GM12878 (cell line): ENCODE measurements at regions of chr9 and their contacts with region 1.

Region 1: DNA sequence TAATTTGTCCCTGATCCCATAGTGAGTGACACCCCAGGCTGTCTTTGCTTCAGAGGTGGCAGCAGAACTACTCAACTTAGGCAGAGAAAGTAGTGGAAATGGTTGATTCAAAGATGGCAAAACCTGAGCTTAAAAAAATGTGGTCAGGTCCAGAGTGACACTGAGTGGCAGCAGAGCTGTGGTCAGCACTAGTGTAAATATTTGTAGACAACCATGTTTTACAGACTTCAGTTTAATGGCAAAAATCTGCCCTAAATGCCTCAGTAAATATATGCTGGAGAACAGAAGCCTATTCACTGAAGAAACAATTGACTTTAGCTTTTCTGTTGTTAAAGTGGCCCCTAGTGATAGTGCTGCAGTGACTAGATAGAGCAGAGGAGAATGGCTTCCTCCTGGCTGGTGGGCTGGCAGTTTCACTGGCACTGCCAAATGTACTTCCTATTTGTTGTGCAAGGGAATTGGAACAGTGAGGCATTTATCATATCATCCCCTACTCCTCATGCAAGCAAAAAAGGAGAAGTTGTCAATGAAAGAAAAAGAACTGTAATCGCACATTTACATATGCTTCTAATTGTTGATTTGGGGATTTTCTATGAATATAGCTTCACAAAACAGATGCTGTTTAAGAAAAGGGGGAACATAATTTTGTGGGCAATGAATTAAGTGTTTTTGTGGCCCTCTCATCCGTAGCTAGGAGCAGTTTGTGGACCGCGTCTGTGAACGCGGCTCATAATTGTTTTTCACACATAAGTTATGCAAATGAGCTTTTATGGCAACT is 12.0 kb downstream of the PBX3 start:
- DNase-seq: no peak
- ATAC-seq: peak; percentile 53
- H3K4me3 ChIP-seq: peak overlapping the region; percentile 49
- H3K27ac ChIP-seq: peak overlapping the region; percentile 4; the same call in 1 of the 2 replicates
- H3K4me1 ChIP-seq: peaks cover 7% of the 10 kb centered on the region; the same call in 1 of the 2 replicates
- H3K27me3 ChIP-seq: no peaks in the 10 kb centered on the region
- CTCF ChIP-seq: no peak; a peak in 1 of 6 replicates
- EP300 ChIP-seq: no peak
- POLR2A ChIP-seq: no peak
- RAD21 ChIP-seq: no peak

Region 2: DNA sequence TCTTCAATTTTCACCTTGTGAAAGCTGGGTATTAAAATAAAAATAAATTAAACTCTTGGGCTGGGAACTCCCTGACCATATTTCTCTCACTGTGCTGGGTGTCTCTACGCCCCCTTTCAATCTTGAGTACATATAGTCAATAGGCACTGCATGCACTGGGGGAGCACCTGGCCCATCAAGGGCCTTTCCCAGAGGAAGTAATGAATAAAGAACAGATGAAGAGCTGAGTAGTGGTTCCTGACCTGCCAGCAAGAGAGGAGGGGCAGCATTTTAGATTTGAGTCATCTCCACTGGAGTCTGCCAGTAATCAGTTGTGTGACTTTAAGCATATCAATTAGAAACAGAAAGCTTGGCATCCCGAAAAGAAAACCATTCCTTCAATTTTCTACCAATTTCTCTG is 58.4 kb before region 1 on chr9:
- CTCF ChIA-PET with region 1: interaction called, 3 read pairs
- POLR2A ChIA-PET with region 1: interaction called, 4 read pairs
- RAD21 ChIA-PET with region 1: interaction called, 10 read pairs
- SMC1A ChIA-PET with region 1: interaction called, 17 read pairs
- in situ Hi-C with region 1: no loop called
- intact Hi-C with region 1: no loop called
- DNase-seq: peak; percentile 84
- ATAC-seq: peak; percentile 89
- H3K4me3 ChIP-seq: peak overlapping the region; percentile 46; the same call in 1 of the 2 replicates
- H3K27ac ChIP-seq: peak overlapping the region; percentile 68
- H3K4me1 ChIP-seq: peaks cover 22% of the 10 kb centered on the region
- H3K27me3 ChIP-seq: no peaks in the 10 kb centered on the region
- CTCF ChIP-seq: no peak
- EP300 ChIP-seq: peak; percentile 81 to 82; a peak in 2 of 4 replicates
- POLR2A ChIP-seq: no peak
- RAD21 ChIP-seq: no peak; the same call in 1 of the 2 replicates

Region 3: GRCh38 chr9:125706661-125707471 is 52.3 kb before region 1 on chr9 and contains the start of gene MAPKAP1:
- CTCF ChIA-PET with region 1: interaction called, 3 read pairs
- POLR2A ChIA-PET with region 1: interaction called, 7 read pairs
- RAD21 ChIA-PET with region 1: interaction called, 10 read pairs
- SMC1A ChIA-PET with region 1: interaction called, 17 read pairs
- in situ Hi-C with region 1: no loop called
- intact Hi-C with region 1: no loop called
- DNase-seq: peak; percentile 81
- ATAC-seq: peak; percentile 94
- H3K4me3 ChIP-seq: peak within 1 kb of the TSS; percentile 90
- H3K27ac ChIP-seq: peak within 1 kb of the TSS; percentile 69
- H3K4me1 ChIP-seq: peaks cover 17% of the 10 kb centered on the region
- H3K27me3 ChIP-seq: no peaks in the 10 kb centered on the region
- CTCF ChIP-seq: no peak
- EP300 ChIP-seq: no peak
- POLR2A ChIP-seq: peak; percentile 95
- RAD21 ChIP-seq: no peak
- polyA plus RNA-seq, gene MAPKAP1: 5.1 to 11.7 TPM

Region 4: GRCh38 chr9:125746017-125746773 is 13.0 kb before region 1 on chr9:
- CTCF ChIA-PET with region 1: interaction called, 8 read pairs
- POLR2A ChIA-PET with region 1: interaction called, 21 read pairs
- RAD21 ChIA-PET with region 1: interaction called, 19 read pairs
- SMC1A ChIA-PET with region 1: interaction called, 20 read pairs
- in situ Hi-C with region 1: no loop called
- intact Hi-C with region 1: no loop called
- DNase-seq: peak; percentile 82
- ATAC-seq: peak; percentile 86
- H3K4me3 ChIP-seq: peak overlapping the region; percentile 81; the same call in 1 of the 2 replicates
- H3K27ac ChIP-seq: peak overlapping the region; percentile 74
- H3K4me1 ChIP-seq: peaks cover 7% of the 10 kb centered on the region
- H3K27me3 ChIP-seq: no peaks in the 10 kb centered on the region
- CTCF ChIP-seq: no peak
- EP300 ChIP-seq: no peak
- POLR2A ChIP-seq: peak; percentile 85
- RAD21 ChIP-seq: no peak

Region 5: DNA sequence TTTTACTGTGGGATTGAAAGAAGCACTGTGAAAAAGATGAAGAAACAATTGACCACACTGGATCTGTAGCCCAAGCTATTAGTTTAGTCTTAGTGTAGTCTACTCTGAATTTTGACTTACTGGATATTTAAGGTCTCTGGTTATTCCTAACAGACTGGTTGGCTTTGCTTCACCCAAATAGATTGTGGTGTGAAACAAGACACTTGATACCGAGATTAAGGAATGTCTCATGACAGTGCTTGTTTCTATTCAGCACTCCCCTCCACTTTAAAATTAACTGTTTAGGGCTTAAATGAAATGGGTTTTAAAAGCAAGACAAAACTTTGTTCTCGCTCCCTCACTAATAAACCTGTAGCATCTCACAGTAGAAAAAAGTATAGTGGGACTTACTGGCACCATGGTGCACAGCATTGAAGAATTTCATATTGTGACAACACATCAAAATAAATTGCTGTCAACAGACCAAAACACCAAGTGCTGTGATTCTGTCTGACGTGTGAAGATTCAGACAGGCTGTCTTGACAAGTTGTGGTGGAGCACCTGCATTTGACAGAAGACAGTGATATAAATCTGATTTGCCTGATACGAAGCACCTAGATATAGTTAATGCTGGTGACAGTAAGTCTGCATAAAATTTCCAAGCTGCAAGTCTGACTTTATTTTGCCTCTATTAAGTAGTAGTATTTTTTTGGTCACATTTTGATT is 61.1 kb after region 1 on chr9:
- CTCF ChIA-PET with region 1: interaction called, 5 read pairs
- POLR2A ChIA-PET with region 1: interaction called, 7 read pairs
- RAD21 ChIA-PET with region 1: interaction called, 4 read pairs
- SMC1A ChIA-PET with region 1: interaction called, 33 read pairs
- in situ Hi-C with region 1: no loop called
- intact Hi-C with region 1: loop called (anchors 5 kb)
- DNase-seq: no peak
- ATAC-seq: peak; percentile 41
- H3K4me3 ChIP-seq: peak overlapping the region; percentile 30; the same call in 1 of the 2 replicates
- H3K27ac ChIP-seq: peak overlapping the region; percentile 56; the same call in 1 of the 2 replicates
- H3K4me1 ChIP-seq: peaks cover 25% of the 10 kb centered on the region
- H3K27me3 ChIP-seq: no peaks in the 10 kb centered on the region
- CTCF ChIP-seq: no peak
- EP300 ChIP-seq: no peak
- POLR2A ChIP-seq: no peak
- RAD21 ChIP-seq: no peak

Region 6: GRCh38 chr9:125889476-125890419 is 130.6 kb after region 1 on chr9:
- CTCF ChIA-PET with region 1: no interaction called
- POLR2A ChIA-PET with region 1: no interaction called
- RAD21 ChIA-PET with region 1: no interaction called
- SMC1A ChIA-PET with region 1: no interaction called
- in situ Hi-C with region 1: no loop called
- intact Hi-C with region 1: loop called (anchors 10 kb)
- DNase-seq: no peak
- ATAC-seq: peak; percentile 79
- H3K4me3 ChIP-seq: peak overlapping the region; percentile 89
- H3K27ac ChIP-seq: no peak overlapping the region
- H3K4me1 ChIP-seq: peaks cover 7% of the 10 kb centered on the region; the same call in 1 of the 2 replicates
- H3K27me3 ChIP-seq: no peaks in the 10 kb centered on the region
- CTCF ChIP-seq: no peak
- EP300 ChIP-seq: no peak
- POLR2A ChIP-seq: no peak
- RAD21 ChIP-seq: no peak